PC-9 (cell line): ENCODE measurements at regions of chr2 and their contacts with region 1.

Region 1: GRCh38 chr2:31467418-31467817 is 52.9 kb upstream of the XDH start:
- DNase-seq: peak; percentile 48 to 88
- H3K4me3 ChIP-seq: no peak overlapping the region; the same call in 1 of the 2 replicates
- H3K27ac ChIP-seq: peak overlapping the region; percentile 63
- H3K4me1 ChIP-seq: peaks cover 20% of the 10 kb centered on the region
- H3K27me3 ChIP-seq: no peaks in the 10 kb centered on the region
- CTCF ChIP-seq: no peak

Region 2: DNA sequence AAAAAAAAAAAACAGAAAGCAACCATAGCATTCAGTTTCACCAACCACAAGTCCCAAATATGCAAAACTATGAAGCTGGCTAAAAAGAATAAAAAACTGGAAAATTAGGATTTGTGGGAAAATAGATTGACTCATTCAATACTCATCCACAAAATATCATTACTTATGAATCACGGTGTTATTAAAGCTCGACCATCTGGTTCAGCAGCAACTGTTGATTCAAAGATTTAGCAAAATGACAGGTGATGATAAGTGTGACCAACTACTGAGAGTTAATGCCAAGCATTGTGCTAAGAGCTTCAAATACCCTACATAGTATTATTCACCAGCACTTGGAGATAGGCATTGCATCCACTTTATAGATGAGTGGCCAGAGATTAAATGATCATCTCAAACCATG is 26.7 kb before region 1 on chr2:
- CTCF ChIA-PET with region 1: no interaction called
- POLR2A ChIA-PET with region 1: no interaction called
- intact Hi-C with region 1: loop called (anchors 2 kb)
- DNase-seq: peak in 1 of 2 experiments; percentile 93
- H3K4me3 ChIP-seq: no peak overlapping the region
- H3K27ac ChIP-seq: no peak overlapping the region
- H3K4me1 ChIP-seq: peaks cover 14% of the 10 kb centered on the region
- H3K27me3 ChIP-seq: no peaks in the 10 kb centered on the region
- CTCF ChIP-seq: no peak

Region 3: DNA sequence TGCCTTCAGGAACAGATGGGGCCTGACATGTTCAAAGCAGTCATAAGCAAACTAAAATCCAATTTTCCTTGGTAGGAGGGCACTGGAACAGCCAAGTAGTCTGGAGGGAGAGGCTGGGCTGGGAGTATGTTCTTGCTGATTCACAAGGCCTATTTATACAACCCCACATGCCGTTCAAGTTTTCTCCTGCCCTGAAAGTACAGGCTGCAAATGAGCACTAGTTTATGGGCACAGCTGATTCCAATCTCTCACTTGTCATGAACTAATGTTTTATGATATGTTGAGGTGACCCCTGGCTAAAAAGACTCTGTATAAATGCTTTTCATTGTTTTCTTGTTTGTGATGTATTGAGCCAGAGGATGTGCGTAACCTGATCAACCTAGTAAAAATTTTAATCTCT is 296.8 kb after region 1 on chr2:
- CTCF ChIA-PET with region 1: no interaction called
- POLR2A ChIA-PET with region 1: no interaction called
- intact Hi-C with region 1: no loop called
- DNase-seq: no peak
- H3K4me3 ChIP-seq: no peak overlapping the region
- H3K27ac ChIP-seq: no peak overlapping the region
- H3K4me1 ChIP-seq: no peaks in the 10 kb centered on the region
- H3K27me3 ChIP-seq: no peaks in the 10 kb centered on the region
- CTCF ChIP-seq: no peak